ENCODE measurements at regions of chr18 and their contacts with region 1.

Region 1: GRCh38 chr18:50194631-50195532 is at the start of gene MYO5B:
- DNase-seq: peak; percentile 44 to 81 (median 71)
- ATAC-seq: peak; percentile 95
- H3K4me3 ChIP-seq: peak within 1 kb of the TSS; percentile 41
- H3K27ac ChIP-seq: no peak within 1 kb of the TSS
- H3K4me1 ChIP-seq: peaks cover 0 to 13% of the 10 kb centered on the region in 2 experiments; a peak in 1 of 5 replicates
- H3K27me3 ChIP-seq: peaks cover 0 to 26% of the 10 kb centered on the region in 2 experiments; a peak in 2 of 5 replicates
- CTCF ChIP-seq: peak in 2 of 3 experiments; percentile 33 to 51; a peak in 3 of 6 replicates
- EP300 ChIP-seq: no peak
- POLR2A ChIP-seq: no peak
- RAD21 ChIP-seq: peak; percentile 5 to 51; a peak in 2 of 4 replicates
- polyA plus RNA-seq, gene MYO5B: 0.28 to 0.42 TPM

Region 2: DNA sequence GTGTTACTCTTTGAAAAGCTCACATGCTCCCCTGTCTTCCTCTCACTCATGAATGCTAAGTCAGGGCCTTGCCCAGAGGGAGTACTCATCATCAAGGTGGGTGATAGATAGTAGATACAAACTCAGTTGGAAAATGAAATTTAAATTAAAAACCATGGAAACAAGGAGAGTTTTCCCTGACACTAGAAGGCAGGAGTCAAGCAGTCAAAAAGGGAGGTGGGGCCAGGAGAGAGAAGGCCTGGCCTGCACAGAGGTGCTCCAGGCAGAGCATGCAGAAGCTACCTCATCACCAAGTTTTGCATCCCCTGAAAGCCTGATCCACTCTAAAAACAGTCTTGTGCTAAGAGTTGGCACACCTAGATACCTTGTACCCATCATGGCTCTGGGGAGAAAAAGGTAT is 143.6 kb before region 1 on chr18:
- CTCF ChIA-PET with region 1: interaction called, 5 read pairs
- POLR2A ChIA-PET with region 1: interaction called, 3 read pairs
- in situ Hi-C with region 1: no loop called
- intact Hi-C with region 1: loop called (anchors 10 kb)
- DNase-seq: peak; percentile 6 to 10 (median 7)
- ATAC-seq: 0 out of 3 replicates have a peak, but pooled peaks have one; percentile 44
- H3K4me3 ChIP-seq: no peak overlapping the region
- H3K27ac ChIP-seq: no peak overlapping the region
- H3K4me1 ChIP-seq: no peaks in the 10 kb centered on the region
- H3K27me3 ChIP-seq: no peaks in the 10 kb centered on the region
- CTCF ChIP-seq: peak; percentile 9 to 42 (median 31); a peak in 2 of 6 replicates
- EP300 ChIP-seq: no peak
- POLR2A ChIP-seq: no peak
- RAD21 ChIP-seq: peak in 1 of 2 experiments; percentile 36; a peak in 2 of 4 replicates

Measured in K562 (cell line).